ENCODE measurements at regions of chr17 and their contacts with region 1.

Region 1: GRCh38 chr17:56723421-56723820 is 110.3 kb downstream of the C17orf67 start:
- DNase-seq: no peak
- H3K4me3 ChIP-seq: no peak overlapping the region
- CTCF ChIP-seq: no peak

Region 2: GRCh38 chr17:56640116-56640515 is 83.3 kb before region 1 on chr17:
- in situ Hi-C with region 1: loop called (anchors 5 kb)
- DNase-seq: no peak
- H3K4me3 ChIP-seq: no peak overlapping the region
- CTCF ChIP-seq: no peak

Region 3: DNA sequence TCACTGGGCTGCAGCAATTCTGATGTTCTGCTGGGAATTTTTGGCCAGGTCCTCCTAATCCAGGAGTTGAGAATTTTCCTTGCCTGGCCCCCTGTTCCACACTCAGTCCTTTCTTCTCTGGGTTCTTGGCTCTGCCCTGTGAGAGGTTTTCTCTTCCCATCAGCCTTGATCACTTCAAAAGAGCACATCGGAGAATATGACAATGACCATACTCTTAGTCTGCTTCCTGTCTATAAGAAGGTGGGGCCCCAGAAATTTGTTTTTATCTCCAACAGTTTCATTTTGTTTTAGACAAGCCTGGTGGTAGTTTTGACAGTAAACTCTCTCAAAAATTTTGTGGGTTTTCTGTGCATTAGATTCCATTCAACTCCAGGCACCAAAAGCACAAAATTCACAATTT is 39.6 kb after region 1 on chr17:
- in situ Hi-C with region 1: loop called (anchors 5 kb)
- DNase-seq: no peak
- H3K4me3 ChIP-seq: no peak overlapping the region
- CTCF ChIP-seq: no peak

Measured in astrocyte of the cerebellum (primary cell).